ENCODE measurements at regions of chr15 and their contacts with region 1.

Region 1: GRCh38 chr15:51380999-51381795 is 39.7 kb downstream of the GLDN start:
- DNase-seq: peak in 1 of 2 experiments; percentile 61
- H3K4me3 ChIP-seq: no peak overlapping the region
- H3K27ac ChIP-seq: no peak overlapping the region
- H3K4me1 ChIP-seq: no peaks in the 10 kb centered on the region; a peak in 1 of 7 replicates
- H3K27me3 ChIP-seq: no peaks in the 10 kb centered on the region
- CTCF ChIP-seq: peak; percentile 83 to 99 (median 98)
- EP300 ChIP-seq: no peak
- POLR2A ChIP-seq: no peak
- RAD21 ChIP-seq: peak; percentile 99 to 100

Region 2: DNA sequence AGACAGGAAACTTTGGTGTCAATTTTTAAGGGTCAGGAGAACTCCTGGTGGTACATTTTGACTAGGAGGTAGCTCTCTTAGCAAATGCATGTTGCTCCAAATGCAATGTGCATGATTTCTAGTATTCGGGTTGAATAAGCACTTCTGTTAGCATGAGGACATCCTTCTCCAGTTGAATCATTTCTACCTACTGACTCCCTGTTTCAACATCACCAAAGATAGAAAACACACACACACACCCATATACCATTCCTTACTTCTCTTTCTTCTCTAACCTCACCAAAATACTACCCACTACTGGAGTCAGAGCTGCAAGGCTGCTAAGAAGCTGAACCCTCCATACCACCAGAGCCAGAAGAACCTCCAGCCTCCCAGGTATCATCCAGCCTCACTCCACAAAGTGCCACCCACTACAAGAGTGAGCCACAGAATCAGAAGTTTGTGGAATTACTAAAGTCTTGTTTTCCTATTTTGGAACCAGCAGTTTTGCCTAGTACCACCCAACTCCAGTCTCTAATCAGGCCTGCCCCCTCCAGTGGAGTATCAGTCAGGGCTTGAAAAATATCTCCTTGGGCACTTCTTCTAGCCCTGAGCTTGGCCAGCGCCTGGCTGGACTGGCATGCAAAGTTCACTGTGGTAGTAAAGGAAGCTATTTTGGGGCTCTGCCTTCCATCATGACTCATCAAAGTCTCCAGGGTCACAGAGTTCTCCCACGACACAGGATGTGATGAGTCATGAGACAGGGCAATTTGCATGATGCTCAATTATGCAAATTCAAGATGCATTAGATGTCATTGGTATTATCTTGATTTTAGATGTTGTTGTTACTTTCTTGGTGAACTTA is 153.0 kb before region 1 on chr15:
- CTCF ChIA-PET with region 1: interaction called, 93 read pairs
- POLR2A ChIA-PET with region 1: no interaction called
- DNase-seq: peak in 1 of 2 experiments; percentile 7
- H3K4me3 ChIP-seq: no peak overlapping the region
- H3K27ac ChIP-seq: no peak overlapping the region
- H3K4me1 ChIP-seq: peaks cover 0 to 4% (median 1%) of the 10 kb centered on the region in 4 experiments; a peak in 2 of 7 replicates
- H3K27me3 ChIP-seq: no peaks in the 10 kb centered on the region
- CTCF ChIP-seq: no peak
- EP300 ChIP-seq: no peak
- POLR2A ChIP-seq: no peak
- RAD21 ChIP-seq: no peak

Region 3: GRCh38 chr15:51281368-51281967 is 99.7 kb before region 1 on chr15:
- CTCF ChIA-PET with region 1: interaction called, 263 read pairs
- POLR2A ChIA-PET with region 1: no interaction called
- DNase-seq: peak in 1 of 2 experiments; percentile 79
- H3K4me3 ChIP-seq: no peak overlapping the region
- H3K27ac ChIP-seq: no peak overlapping the region
- H3K4me1 ChIP-seq: no peaks in the 10 kb centered on the region
- H3K27me3 ChIP-seq: no peaks in the 10 kb centered on the region
- CTCF ChIP-seq: peak; percentile 80 to 83 (median 81)
- EP300 ChIP-seq: no peak
- POLR2A ChIP-seq: no peak
- RAD21 ChIP-seq: peak; percentile 80 to 86

Region 4: GRCh38 chr15:51312166-51313097 is 68.8 kb before region 1 on chr15:
- CTCF ChIA-PET with region 1: interaction called, 13 read pairs
- POLR2A ChIA-PET with region 1: no interaction called
- DNase-seq: no peak
- H3K4me3 ChIP-seq: no peak overlapping the region
- H3K27ac ChIP-seq: no peak overlapping the region
- H3K4me1 ChIP-seq: no peaks in the 10 kb centered on the region
- H3K27me3 ChIP-seq: 0 out of 7 replicates have a peak, but pooled peaks cover 0 to 3% (median 0%) of the 10 kb centered on the region in 4 experiments
- CTCF ChIP-seq: no peak
- EP300 ChIP-seq: no peak
- POLR2A ChIP-seq: no peak
- RAD21 ChIP-seq: no peak

Region 5: GRCh38 chr15:51366960-51367648 is 14.1 kb before region 1 on chr15:
- CTCF ChIA-PET with region 1: interaction called, 42 read pairs
- POLR2A ChIA-PET with region 1: no interaction called
- DNase-seq: no peak
- H3K4me3 ChIP-seq: no peak overlapping the region
- H3K27ac ChIP-seq: no peak overlapping the region
- H3K4me1 ChIP-seq: peaks cover 0 to 2% (median 0%) of the 10 kb centered on the region in 4 experiments; a peak in 1 of 7 replicates
- H3K27me3 ChIP-seq: no peaks in the 10 kb centered on the region; a peak in 1 of 7 replicates
- CTCF ChIP-seq: no peak
- EP300 ChIP-seq: no peak
- POLR2A ChIP-seq: no peak
- RAD21 ChIP-seq: no peak

Region 6: DNA sequence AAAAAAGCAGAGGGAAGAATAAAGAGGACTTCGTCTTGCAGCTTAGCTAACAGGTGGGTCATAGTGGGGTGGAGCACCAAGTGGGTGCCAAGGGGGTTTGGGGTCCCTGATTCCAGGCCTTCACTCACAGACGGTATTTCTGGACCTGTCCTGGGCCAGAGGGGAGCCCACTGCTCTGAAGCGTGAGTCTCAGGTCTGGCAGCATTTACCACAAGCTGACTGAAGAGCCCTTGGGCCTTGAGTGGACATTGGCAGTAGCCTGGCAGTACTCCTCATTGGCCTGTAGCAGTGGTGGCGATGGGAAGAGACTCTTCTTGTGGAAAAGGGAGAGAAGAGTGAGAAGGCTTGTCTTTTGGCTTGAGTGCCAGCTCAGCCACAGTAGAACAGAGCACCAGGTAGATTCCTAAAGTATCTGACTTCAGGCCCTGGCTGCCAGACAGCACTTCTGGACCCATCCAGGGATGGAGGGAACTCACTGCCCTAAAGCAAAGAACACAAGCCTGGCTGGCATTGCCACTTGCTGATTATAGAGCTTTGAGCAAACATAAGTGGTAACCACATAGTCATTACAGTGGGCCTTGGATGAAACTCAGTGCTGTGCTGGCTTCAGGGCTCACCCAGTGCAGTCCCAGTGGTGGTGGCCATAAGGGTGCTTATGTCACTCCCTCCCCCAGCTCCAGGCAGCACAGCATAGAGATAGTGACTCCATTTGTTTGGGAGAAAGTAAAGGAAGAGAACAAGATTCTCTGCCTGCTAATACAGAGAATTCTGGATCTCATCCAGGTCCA is 33.3 kb after region 1 on chr15:
- CTCF ChIA-PET with region 1: interaction called, 10 read pairs
- POLR2A ChIA-PET with region 1: no interaction called
- DNase-seq: no peak
- H3K4me3 ChIP-seq: no peak overlapping the region
- H3K27ac ChIP-seq: no peak overlapping the region
- H3K4me1 ChIP-seq: peaks cover 0 to 2% (median 1%) of the 10 kb centered on the region in 4 experiments; a peak in 2 of 7 replicates
- H3K27me3 ChIP-seq: no peaks in the 10 kb centered on the region
- CTCF ChIP-seq: no peak
- EP300 ChIP-seq: no peak
- POLR2A ChIP-seq: no peak
- RAD21 ChIP-seq: no peak